ENCODE measurements at regions of chr19 and their contacts with region 1.

Region 1: DNA sequence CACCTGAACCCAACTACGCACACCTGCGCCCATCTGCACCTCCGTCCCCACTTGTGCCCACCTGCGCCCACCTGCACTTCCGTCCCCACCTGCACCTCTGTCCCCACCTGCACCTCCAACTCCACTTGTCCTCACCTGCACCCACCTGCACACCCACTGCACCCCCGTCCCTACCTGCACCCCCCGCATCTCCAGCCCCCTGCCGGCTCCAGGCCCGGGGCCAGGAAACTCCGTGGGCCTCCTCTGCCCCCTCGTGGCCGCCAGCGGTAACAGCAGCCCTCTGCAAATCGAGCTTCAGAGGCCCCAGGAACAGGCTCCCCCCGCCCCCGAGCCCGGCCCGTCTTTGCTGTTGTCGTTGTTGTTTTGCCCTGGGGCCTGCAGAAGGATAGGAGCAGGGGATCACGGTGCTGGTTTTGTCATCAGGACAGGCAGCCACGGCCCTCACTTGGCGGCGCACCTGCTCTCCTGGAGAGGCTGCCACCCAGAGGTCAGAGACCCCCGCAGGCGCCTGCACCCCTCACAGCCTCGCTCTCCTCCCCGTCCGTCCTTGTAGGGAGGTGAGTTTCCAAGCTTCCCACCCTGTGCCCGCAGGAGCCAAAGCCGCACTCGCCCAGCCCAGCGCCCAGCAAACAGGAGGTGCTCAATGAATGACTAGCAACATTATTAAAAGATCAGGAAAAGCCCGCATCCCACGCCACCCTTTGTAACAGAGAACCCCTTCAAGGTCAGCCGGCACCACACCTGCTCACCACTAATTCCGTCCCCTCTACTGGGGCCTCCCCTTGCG is 65.4 kb downstream of the GNG7 start:
- DNase-seq: peak; percentile 76
- ATAC-seq: peak; percentile 70
- H3K4me3 Mint-ChIP-seq: peak overlapping the region; percentile 63
- H3K27ac Mint-ChIP-seq: no peak overlapping the region
- H3K4me1 Mint-ChIP-seq: peaks cover 17% of the 10 kb centered on the region
- H3K27me3 Mint-ChIP-seq: no peaks in the 10 kb centered on the region; the same call in 1 of the 2 replicates
- CTCF ChIP-seq: peak; percentile 83; the same call in 1 of the 2 replicates

Region 2: DNA sequence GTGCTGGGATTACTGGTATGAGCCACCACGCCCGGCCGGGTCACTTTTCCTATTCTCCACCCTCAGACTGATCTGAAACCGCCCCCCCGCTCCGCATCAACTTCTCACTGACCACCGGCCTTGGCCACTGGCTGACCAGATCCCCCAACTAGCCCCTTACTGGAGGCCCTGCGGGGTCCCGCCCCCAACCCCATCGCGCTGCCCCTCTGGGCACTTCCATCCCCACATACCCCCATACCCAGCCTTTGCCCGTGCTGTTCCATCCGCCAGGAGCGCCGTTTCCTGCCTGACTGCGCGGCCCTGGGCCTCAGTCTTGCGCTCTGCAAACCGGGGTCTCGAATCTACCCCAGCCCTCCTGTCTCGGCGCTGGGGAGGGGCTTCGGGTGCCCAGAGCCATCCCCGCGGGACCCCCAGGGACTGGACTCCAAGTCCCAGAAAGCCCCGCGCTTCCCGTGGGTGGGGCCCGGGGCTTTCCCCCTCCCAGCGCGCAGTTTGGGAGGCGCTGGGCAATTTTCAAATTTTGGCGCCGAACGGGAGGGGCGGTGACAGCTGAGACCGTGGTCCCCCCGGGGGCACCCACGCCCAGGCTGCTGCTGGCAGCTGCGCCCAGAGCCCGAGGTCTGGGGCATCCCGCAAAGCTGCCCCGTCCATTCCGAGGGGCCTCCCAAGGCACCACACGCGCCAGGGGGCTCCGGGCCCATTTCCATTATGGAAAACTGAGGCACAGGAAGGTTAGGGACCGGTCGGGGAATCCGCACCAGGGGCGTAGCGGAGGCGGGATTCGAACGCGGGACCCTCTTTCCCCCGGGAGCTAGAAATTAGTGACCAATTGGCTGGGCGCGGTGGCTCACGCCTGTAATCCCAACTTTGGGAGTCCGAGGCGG is 175.1 kb before region 1 on chr19:
- CTCF ChIA-PET with region 1: interaction called, 15 read pairs
- POLR2A ChIA-PET with region 1: interaction called, 3 read pairs
- DNase-seq: peak; percentile 78
- ATAC-seq: peak; percentile 61
- H3K4me3 Mint-ChIP-seq: peak overlapping the region; percentile 77
- H3K27ac Mint-ChIP-seq: no peak overlapping the region
- H3K4me1 Mint-ChIP-seq: peaks cover 9% of the 10 kb centered on the region; the same call in 1 of the 2 replicates
- H3K27me3 Mint-ChIP-seq: no peaks in the 10 kb centered on the region
- CTCF ChIP-seq: no peak

Region 3: DNA sequence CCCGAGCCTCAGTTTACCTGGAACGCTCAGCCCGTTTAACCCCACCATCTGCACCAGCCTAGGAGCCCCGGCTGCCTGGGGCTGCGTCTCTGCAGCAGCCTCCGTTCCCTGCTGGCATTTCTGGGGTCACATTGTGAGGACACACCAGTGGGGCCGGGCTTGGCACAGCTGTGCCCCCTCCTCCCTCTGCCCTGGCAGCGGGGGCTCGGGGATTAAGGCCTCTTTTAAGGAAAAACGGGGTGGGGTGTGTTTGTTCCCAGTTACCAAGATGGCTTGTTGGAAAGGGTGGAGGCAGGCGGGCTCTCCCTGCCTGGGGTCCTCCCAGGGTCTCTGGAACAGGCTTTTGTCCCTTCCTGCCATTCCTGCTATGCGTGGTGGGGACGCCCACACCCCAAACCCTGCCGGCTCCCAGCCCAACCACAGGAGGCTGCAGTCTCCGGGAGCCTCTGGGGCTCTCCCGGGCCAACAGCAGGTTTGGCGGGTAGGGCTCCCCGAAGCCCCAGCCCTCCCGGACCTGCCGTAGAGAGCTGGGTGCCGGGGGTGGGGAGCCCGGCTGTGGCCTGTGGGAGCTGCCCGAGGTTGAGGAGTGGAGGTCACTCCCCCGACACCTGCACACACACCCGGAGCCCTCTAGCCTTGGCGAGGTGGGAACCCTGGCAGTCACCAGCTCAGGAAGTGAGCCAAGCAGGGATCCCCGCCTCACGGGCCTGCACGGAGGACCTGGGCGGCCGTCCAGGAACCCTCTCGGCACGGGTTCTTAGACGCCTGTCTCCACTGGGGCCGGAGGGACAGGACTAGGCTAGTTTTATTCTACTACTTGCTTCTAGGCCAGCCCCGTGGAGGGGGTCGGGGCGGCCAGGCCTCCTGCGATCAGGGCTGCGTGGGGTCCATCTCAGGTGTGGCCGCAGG is 124.3 kb before region 1 on chr19:
- CTCF ChIA-PET with region 1: no interaction called
- POLR2A ChIA-PET with region 1: no interaction called
- DNase-seq: no peak
- ATAC-seq: peak; percentile 55
- H3K4me3 Mint-ChIP-seq: no peak overlapping the region
- H3K27ac Mint-ChIP-seq: peak overlapping the region; percentile 76; the same call in 1 of the 2 replicates
- H3K4me1 Mint-ChIP-seq: peaks cover 6% of the 10 kb centered on the region; the same call in 1 of the 2 replicates
- H3K27me3 Mint-ChIP-seq: no peaks in the 10 kb centered on the region
- CTCF ChIP-seq: no peak

Region 4: DNA sequence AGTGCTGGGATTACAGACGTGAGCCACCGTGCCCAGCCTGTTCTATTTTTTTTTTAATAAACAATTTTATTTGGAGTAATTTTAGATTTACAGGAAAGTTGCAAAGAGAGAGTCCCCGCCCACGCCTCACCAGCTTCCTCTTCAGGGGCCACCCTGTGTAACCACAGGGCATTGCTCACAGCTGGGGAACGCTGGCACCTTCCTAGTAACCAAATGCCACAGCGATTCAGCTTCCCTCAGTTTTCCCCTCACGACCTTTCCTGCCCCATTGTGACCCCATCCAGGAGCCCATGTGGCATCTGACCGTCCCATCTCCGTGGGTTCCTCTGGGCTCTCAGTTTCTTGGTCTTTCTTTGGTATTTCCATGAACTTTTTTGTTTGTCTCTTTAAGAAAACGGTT is 18.5 kb before region 1 on chr19:
- CTCF ChIA-PET with region 1: interaction called, 35 read pairs
- POLR2A ChIA-PET with region 1: no interaction called
- DNase-seq: no peak
- ATAC-seq: no peak
- H3K4me3 Mint-ChIP-seq: no peak overlapping the region
- H3K27ac Mint-ChIP-seq: no peak overlapping the region
- H3K4me1 Mint-ChIP-seq: peaks cover 17% of the 10 kb centered on the region
- H3K27me3 Mint-ChIP-seq: peaks cover 17% of the 10 kb centered on the region
- CTCF ChIP-seq: no peak

Region 5: DNA sequence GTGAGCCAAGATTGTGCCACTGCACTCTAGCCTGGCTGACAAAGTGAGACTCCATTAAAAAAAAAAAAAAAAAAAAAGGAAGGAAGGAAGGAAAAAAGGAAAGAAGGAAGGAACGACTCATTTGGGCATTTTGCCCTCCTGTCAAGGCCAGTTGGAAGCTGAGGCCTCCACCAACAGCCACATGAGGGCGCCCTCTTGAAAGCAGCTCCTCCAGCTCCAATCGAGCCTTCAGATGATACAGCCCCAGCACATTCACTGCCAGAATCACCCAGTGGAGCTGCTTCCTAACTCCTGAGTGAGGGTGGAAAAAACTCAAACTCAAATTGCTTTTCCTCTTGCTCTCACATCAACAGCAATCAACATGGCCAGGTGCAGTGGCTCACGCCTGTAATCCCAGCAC is 24.5 kb after region 1 on chr19:
- CTCF ChIA-PET with region 1: interaction called, 10 read pairs
- POLR2A ChIA-PET with region 1: no interaction called
- DNase-seq: peak; percentile 46
- ATAC-seq: no peak
- H3K4me3 Mint-ChIP-seq: no peak overlapping the region
- H3K27ac Mint-ChIP-seq: no peak overlapping the region
- H3K4me1 Mint-ChIP-seq: no peaks in the 10 kb centered on the region
- H3K27me3 Mint-ChIP-seq: peaks cover 3% of the 10 kb centered on the region
- CTCF ChIP-seq: no peak